Naive thymus-derived CD8-positive, alpha-beta T cell (primary cell): ENCODE measurements at regions of chr2 and their contacts with region 1.

Region 1: DNA sequence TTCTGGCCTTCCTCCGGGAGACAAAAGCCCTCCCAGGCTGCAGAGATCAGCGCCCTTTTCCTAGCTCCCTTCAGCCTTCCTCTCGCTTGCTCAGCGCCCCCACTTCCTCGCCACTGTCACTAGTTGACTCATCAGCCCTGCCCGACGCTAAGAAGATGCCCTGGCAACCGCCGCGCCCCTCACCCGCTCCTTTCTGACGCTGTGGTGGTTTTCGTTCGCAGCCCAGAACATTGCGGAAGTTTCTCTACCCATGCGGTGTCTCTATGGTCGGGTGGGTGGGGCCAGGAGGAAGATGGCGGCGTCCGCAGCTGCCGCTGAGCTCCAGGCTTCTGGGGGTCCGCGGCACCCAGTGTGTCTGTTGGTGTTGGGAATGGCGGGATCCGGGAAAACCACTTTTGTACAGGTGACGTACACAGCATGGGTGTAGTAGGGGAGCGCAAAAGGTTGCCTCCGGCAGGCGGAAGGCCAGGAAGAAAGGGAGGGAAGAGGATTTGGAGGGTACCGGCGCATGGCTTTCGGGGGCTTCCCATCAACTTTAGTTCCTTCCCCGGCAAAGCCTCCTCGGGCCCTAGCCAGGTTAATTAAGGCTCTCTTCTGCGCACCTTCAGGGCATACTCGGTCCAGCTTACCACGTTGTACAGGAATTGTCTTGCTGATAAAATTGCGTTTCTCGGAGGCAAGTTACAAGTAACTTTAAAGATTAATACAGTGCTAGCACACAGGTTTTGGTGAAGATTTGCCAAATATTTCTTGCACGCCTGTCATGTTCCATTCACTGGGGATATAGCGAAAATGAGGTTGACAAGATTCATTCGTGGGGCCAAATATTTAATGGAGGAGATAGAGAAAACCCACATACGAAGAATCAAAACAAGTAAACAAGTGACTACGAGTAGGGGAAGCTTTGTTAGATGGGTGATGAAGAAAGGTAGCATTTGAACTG is at the starts of genes CCDC121 and GPN1:
- DNase-seq: peak; percentile 84 to 97 (median 94)
- ATAC-seq: peak; percentile 99 to 100
- H3K4me3 Mint-ChIP-seq: no peak within 1 kb of the TSS
- H3K27ac Mint-ChIP-seq: peak within 1 kb of the TSS in 3 of 10 donors; percentile 71 to 84 (median 76)
- H3K4me1 Mint-ChIP-seq: peaks cover 6 to 25% (median 13%) of the 10 kb centered on the region in 4 donors
- H3K27me3 Mint-ChIP-seq: no peaks in the 10 kb centered on the region
- polyA plus RNA-seq, gene CCDC121: 0.38 to 1.8 (median 0.99) TPM
- polyA plus RNA-seq, gene GPN1: 57.1 to 70.4 (median 61.3) TPM

Region 2: GRCh38 chr2:27663463-27664249 is 34.6 kb after region 1 on chr2 and contains the starts of genes SLC4A1AP and SUPT7L:
- POLR2A ChIA-PET with region 1: interaction called, 15 read pairs
- DNase-seq: peak; percentile 54 to 93 (median 74)
- ATAC-seq: peak; percentile 79 to 81
- H3K4me3 Mint-ChIP-seq: peak within 1 kb of the TSS; percentile 93 to 100 (median 99)
- H3K27ac Mint-ChIP-seq: peak within 1 kb of the TSS; percentile 98 to 100 (median 100)
- H3K4me1 Mint-ChIP-seq: peaks cover 19 to 61% (median 57%) of the 10 kb centered on the region in 4 donors
- H3K27me3 Mint-ChIP-seq: no peaks in the 10 kb centered on the region
- polyA plus RNA-seq, gene SLC4A1AP: 25.3 to 28.6 (median 27.6) TPM
- polyA plus RNA-seq, gene SUPT7L: 17.0 to 23.3 (median 19.9) TPM